CD4-positive, alpha-beta T cell (primary cell): ENCODE measurements at regions of chrX and their contacts with region 1.

Region 1: GRCh38 chrX:41250867-41251266 is 83.1 kb upstream of the DDX3X start:
- DNase-seq: no peak
- ATAC-seq: no peak
- H3K4me3 ChIP-seq: no peak overlapping the region
- H3K4me3 Mint-ChIP-seq: no peak overlapping the region
- H3K27ac ChIP-seq: no peak overlapping the region
- H3K27ac Mint-ChIP-seq: no peak overlapping the region
- H3K4me1 ChIP-seq: peaks cover 12% of the 10 kb centered on the region
- H3K4me1 Mint-ChIP-seq: peaks cover 4% of the 10 kb centered on the region
- H3K27me3 ChIP-seq: no peaks in the 10 kb centered on the region
- H3K27me3 Mint-ChIP-seq: peaks cover 7% of the 10 kb centered on the region
- CTCF ChIP-seq: no peak

Region 2: GRCh38 chrX:40539214-40540142 is 711.4 kb before region 1 on chrX:
- CTCF ChIA-PET with region 1: no interaction called
- POLR2A ChIA-PET with region 1: no interaction called
- intact Hi-C with region 1: loop called in 1 of 2 experiments (anchors 5 kb)
- DNase-seq: peak; percentile 58 to 82 (median 68)
- ATAC-seq: peak; percentile 95
- H3K4me3 ChIP-seq: no peak overlapping the region
- H3K4me3 Mint-ChIP-seq: peak overlapping the region; percentile 4
- H3K27ac ChIP-seq: no peak overlapping the region
- H3K27ac Mint-ChIP-seq: peak overlapping the region; percentile 69
- H3K4me1 ChIP-seq: peaks cover 15% of the 10 kb centered on the region
- H3K4me1 Mint-ChIP-seq: peaks cover 25% of the 10 kb centered on the region
- H3K27me3 ChIP-seq: no peaks in the 10 kb centered on the region
- H3K27me3 Mint-ChIP-seq: no peaks in the 10 kb centered on the region
- CTCF ChIP-seq: peak; percentile 49

Region 3: DNA sequence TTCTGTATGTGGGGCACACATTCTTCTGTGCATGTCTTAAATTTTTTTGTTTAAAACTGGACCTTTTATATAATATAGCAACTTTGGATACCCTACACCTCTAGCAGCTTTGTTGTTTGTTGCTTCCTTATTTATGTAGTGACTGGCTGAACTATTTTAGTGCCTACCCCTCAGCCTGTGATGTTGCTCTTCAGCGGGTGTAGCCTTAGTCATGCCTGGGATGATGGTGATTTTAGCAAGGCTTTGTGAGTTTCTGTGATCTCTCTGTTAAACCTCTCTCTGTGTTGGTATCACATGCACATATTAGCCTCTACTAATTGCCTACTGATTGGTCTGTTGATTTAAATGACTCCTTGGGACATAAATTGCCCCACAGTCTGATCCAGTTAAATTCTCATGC is 142.9 kb before region 1 on chrX:
- CTCF ChIA-PET with region 1: no interaction called
- POLR2A ChIA-PET with region 1: no interaction called
- intact Hi-C with region 1: no loop called
- DNase-seq: no peak
- ATAC-seq: no peak
- H3K4me3 ChIP-seq: no peak overlapping the region
- H3K4me3 Mint-ChIP-seq: no peak overlapping the region
- H3K27ac ChIP-seq: no peak overlapping the region
- H3K27ac Mint-ChIP-seq: peak overlapping the region; percentile 80
- H3K4me1 ChIP-seq: peaks cover 18% of the 10 kb centered on the region
- H3K4me1 Mint-ChIP-seq: peaks cover 79% of the 10 kb centered on the region
- H3K27me3 ChIP-seq: no peaks in the 10 kb centered on the region
- H3K27me3 Mint-ChIP-seq: no peaks in the 10 kb centered on the region
- CTCF ChIP-seq: no peak

Region 4: DNA sequence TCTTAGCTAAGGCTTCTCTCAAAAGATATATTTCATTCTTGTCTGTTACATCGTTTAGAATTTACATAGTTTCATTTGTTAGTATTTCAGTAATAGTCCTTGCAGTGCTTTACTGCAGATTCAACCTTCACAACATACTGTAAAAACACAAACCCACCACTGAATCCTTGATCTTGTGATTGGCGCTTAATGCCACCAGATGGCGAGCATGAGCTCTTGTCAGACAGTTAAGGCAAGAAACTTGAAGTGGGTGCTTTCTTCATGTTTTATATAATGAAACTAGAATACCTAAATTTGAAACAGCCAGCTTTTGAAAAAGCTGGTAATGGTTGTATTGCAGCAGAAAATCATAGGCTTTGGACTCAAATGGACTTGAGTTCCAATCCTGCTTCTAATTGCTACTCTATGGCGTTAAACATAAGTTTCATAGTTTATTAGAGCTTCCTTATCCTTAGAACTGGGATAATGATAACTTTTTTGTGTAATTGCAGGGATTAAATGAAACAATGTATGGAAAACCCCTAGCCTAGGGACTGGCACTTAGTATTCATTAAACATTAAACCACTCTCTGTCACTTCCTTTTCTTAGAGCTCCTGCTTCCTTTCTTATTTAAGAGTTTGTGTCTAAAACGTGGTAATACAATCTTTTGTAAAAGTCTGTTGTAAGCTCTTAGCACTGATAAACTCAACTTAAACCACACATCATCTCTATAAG is 70.5 kb before region 1 on chrX:
- CTCF ChIA-PET with region 1: interaction called, 6 read pairs
- POLR2A ChIA-PET with region 1: no interaction called
- intact Hi-C with region 1: loop called in 1 of 2 experiments (anchors 5 kb)
- DNase-seq: peak; percentile 4 to 73 (median 36)
- ATAC-seq: peak; percentile 81
- H3K4me3 ChIP-seq: no peak overlapping the region
- H3K4me3 Mint-ChIP-seq: no peak overlapping the region
- H3K27ac ChIP-seq: no peak overlapping the region
- H3K27ac Mint-ChIP-seq: peak overlapping the region; percentile 77
- H3K4me1 ChIP-seq: no peaks in the 10 kb centered on the region
- H3K4me1 Mint-ChIP-seq: peaks cover 51% of the 10 kb centered on the region
- H3K27me3 ChIP-seq: no peaks in the 10 kb centered on the region
- H3K27me3 Mint-ChIP-seq: no peaks in the 10 kb centered on the region
- CTCF ChIP-seq: peak; percentile 62